Activated T-helper 2 cell treated with anti-CD3 and anti-CD28 coated beads, Interferon-gamma antibody, Interleukin-2, Interleukin-4, amounts not matched to agents 10 μg/mL and 5 μg/mL and 100 μg/mL, durations not matched to agents 14 hours and 24 hours and 36 hours (primary cell): ENCODE measurements at regions of chr1 and their contacts with region 1.

Region 1: GRCh38 chr1:162497723-162498500 is at the start of gene UHMK1:
- DNase-seq: peak; percentile 85
- H3K4me3 Mint-ChIP-seq: peak within 1 kb of the TSS; percentile 93
- H3K27ac Mint-ChIP-seq: peak within 1 kb of the TSS; percentile 90
- H3K4me1 Mint-ChIP-seq: peaks cover 31% of the 10 kb centered on the region
- H3K27me3 Mint-ChIP-seq: peaks cover 3% of the 10 kb centered on the region
- total RNA-seq, gene UHMK1: 56.3 and 56.7 TPM in 2 replicates

Region 2: DNA sequence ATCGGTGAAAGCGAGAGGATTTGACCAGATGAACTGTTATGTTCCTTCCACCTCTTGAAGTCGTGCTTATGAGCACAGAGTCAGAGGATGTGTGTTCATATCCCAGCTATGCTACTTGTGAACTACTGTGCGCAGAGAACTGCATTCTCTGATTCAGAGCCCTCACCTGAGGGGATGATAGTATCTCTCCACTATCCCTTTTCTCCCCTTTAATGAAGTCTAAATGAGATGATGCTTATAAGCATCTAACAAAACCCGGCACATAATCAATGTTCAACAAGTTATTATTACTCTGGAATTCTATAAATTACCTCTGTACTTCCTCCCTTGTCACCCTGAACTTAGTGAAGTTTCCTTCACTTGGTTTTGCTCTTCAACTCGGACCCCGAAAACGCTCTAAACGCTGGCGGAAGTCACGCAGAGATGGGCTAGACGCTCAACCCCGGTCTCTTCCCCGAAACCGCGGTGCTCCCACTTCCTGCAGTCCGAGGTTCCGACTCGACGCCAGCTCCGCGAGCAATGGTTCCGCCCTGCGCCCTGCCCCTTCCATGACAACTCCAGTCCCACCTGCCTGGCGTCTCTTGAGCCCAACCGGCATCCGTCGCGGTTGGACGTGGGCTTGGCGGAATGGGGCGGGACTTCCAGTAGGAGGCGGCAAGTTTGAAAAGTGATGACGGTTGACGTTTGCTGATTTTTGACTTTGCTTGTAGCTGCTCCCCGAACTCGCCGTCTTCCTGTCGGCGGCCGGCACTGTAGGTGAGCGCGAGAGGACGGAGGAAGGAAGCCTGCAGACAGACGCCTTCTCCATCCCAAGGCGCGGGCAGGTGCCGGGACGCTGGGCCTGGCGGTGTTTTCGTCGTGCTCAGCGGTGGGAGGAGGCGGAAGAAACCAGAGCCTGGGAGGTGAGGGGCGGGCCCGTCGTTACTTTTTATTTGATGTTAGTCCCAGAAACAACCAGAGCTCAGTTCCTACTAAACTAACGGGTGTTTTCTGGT is 823.7 kb after region 1 on chr1 and contains the start of gene NUF2:
- intact Hi-C with region 1: loop called (anchors 5 kb)
- DNase-seq: peak; percentile 96
- H3K4me3 Mint-ChIP-seq: peak within 1 kb of the TSS; percentile 96
- H3K27ac Mint-ChIP-seq: peak within 1 kb of the TSS; percentile 97
- H3K4me1 Mint-ChIP-seq: peaks cover 32% of the 10 kb centered on the region
- H3K27me3 Mint-ChIP-seq: no peaks in the 10 kb centered on the region
- total RNA-seq, gene NUF2: 45.5 and 47.4 TPM in 2 replicates